IMR-90 (cell line): ENCODE measurements at regions of chr14 and their contacts with region 1.

Region 1: DNA sequence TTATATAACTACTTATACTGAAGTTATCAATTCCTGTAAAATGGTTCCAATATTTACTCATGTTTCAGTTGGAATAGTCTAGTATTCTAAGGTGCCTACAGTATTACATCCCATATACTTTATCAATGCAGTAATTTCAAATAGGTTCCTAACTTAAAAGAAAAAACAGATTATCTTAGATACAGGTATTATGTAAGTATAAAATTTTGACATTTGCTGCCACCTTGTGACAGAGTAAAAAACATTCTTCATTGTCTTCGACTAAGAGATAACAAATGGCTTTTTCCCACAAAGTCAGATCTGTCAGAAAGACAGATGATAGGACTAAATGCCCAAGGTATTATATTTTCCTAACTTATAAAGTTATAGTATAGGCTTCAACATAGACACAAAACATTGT is 78.7 kb downstream of the TXNDC16 start:
- DNase-seq: peak; percentile 51
- ATAC-seq: peak; percentile 29; the same call in 1 of the 2 replicates
- H3K4me3 ChIP-seq: no peak overlapping the region
- H3K27ac ChIP-seq: no peak overlapping the region
- H3K4me1 ChIP-seq: no peaks in the 10 kb centered on the region
- H3K27me3 ChIP-seq: no peaks in the 10 kb centered on the region
- CTCF ChIP-seq: peak; percentile 47
- POLR2A ChIP-seq: no peak
- RAD21 ChIP-seq: peak; percentile 56

Region 2: GRCh38 chr14:52080817-52081755 is 392.5 kb before region 1 on chr14:
- CTCF ChIA-PET with region 1: no interaction called
- POLR2A ChIA-PET with region 1: no interaction called
- dilution Hi-C with region 1: no loop called
- in situ Hi-C with region 1: no loop called
- intact Hi-C with region 1: no loop called
- DNase-seq: peak; percentile 96
- ATAC-seq: peak; percentile 80
- H3K4me3 ChIP-seq: no peak overlapping the region
- H3K27ac ChIP-seq: peak overlapping the region; percentile 34
- H3K4me1 ChIP-seq: peaks cover 32% of the 10 kb centered on the region
- H3K27me3 ChIP-seq: no peaks in the 10 kb centered on the region
- CTCF ChIP-seq: no peak
- POLR2A ChIP-seq: peak; percentile 79
- RAD21 ChIP-seq: peak; percentile 14; the same call in 1 of the 2 replicates

Region 3: DNA sequence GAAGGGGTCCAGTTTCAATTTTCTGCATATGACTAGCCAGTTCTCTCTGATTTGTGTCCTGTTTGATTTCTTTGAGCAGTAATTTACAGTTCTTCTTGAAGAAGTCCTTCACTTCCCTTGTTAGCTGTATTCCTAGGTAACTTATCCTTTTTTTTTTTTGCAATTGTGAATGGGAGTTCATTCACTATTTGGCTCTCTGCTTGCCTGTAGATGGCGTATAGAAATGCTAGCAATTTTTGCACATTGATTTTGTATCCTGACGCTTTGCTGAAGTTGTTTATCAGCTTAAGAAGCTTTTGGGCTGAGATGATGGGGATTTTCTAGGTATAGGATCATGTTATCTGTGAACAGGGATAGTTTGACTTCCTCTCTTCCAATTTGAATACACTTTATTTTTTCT is 327.1 kb before region 1 on chr14:
- CTCF ChIA-PET with region 1: no interaction called
- POLR2A ChIA-PET with region 1: no interaction called
- dilution Hi-C with region 1: no loop called
- in situ Hi-C with region 1: no loop called
- intact Hi-C with region 1: loop called (anchors 5 kb)
- DNase-seq: no peak
- ATAC-seq: no peak
- H3K4me3 ChIP-seq: no peak overlapping the region
- H3K27ac ChIP-seq: no peak overlapping the region
- H3K4me1 ChIP-seq: no peaks in the 10 kb centered on the region
- H3K27me3 ChIP-seq: peaks cover 22% of the 10 kb centered on the region
- CTCF ChIP-seq: peak; percentile 29; the same call in 1 of the 2 replicates
- POLR2A ChIP-seq: no peak
- RAD21 ChIP-seq: no peak